Activated CD4-positive, alpha-beta T cell treated with anti-CD3 and anti-CD28 coated beads, Interleukin-2, amount 10 ng/mL, durations not matched to agents 7 days and 5 days (primary cell): ENCODE measurements at regions of chr20 and their contacts with region 1.

Region 1: DNA sequence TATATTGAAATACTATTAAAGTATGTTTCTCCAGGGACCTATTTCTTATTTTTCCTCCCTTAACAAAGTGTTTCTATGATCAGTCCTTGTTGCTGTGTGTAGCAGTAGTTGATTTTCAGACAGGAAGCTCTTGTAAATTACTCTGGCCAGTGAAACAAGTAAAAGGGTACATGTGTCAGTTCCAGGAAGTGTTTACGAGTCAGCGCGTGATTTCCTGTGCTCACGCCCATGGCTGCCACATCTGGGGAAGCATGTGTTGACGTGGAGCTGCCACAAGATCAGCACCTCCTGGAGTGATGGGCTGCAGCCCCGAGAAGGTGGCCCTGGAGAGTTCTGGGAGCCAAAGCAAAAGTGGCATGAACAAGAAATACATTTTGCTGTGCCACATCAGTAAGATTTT is 38.6 kb upstream of the GGTLC1 start:
- DNase-seq: peak; percentile 88
- H3K4me3 Mint-ChIP-seq: peak overlapping the region; percentile 60
- H3K27ac Mint-ChIP-seq: peak overlapping the region; percentile 97
- H3K4me1 Mint-ChIP-seq: peaks cover 65% of the 10 kb centered on the region
- H3K27me3 Mint-ChIP-seq: no peaks in the 10 kb centered on the region

Region 2: DNA sequence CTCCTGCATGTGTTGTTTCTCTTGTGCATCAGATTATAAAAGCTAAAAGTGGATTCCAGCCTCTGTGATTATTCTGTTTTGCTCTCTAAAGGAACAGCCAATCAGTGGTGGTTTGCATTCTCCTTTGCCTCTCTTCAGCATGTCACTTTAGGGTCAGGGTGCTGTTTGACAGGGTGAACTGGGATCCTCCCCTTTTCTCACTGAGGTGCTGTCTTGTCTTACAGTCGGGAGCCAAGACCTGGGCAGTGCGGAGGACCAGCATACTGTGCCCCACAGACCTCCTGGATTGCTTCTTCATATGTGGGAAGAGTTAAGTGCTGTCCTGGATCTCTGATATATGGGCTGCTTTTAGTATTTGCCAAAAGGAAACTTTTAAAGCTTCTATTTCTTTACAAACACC is 185.5 kb before region 1 on chr20:
- CTCF ChIA-PET with region 1: no interaction called
- POLR2A ChIA-PET with region 1: no interaction called
- DNase-seq: no peak
- H3K4me3 Mint-ChIP-seq: no peak overlapping the region
- H3K27ac Mint-ChIP-seq: no peak overlapping the region
- H3K4me1 Mint-ChIP-seq: peaks cover 1% of the 10 kb centered on the region
- H3K27me3 Mint-ChIP-seq: peaks cover 13% of the 10 kb centered on the region

Region 3: DNA sequence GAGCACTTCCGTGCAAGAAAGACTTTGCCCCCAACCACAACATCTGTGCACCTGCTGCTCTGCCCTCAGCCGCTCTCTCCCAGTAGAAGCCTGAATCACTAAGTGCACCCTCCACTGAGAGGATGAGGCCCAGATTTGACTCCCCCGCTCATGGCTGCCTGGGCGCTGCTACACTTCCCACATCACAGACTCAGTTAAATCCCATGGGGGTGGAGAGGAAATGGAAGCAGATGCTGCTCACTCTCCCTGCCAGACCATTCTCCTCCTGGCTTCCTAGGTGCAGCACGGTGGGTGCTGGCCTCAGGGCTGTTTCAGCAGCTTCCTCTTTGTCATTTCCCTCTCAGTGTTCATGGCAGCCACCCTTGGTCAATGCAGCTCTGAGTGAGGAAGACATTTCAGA is 152.5 kb before region 1 on chr20:
- CTCF ChIA-PET with region 1: no interaction called
- POLR2A ChIA-PET with region 1: no interaction called
- DNase-seq: no peak
- H3K4me3 Mint-ChIP-seq: no peak overlapping the region
- H3K27ac Mint-ChIP-seq: peak overlapping the region; percentile 65
- H3K4me1 Mint-ChIP-seq: peaks cover 34% of the 10 kb centered on the region
- H3K27me3 Mint-ChIP-seq: no peaks in the 10 kb centered on the region

Region 4: GRCh38 chr20:24039196-24039595 is 12.0 kb after region 1 on chr20:
- CTCF ChIA-PET with region 1: interaction called, 21 read pairs
- POLR2A ChIA-PET with region 1: interaction called, 3 read pairs
- DNase-seq: no peak
- H3K4me3 Mint-ChIP-seq: no peak overlapping the region
- H3K27ac Mint-ChIP-seq: no peak overlapping the region
- H3K4me1 Mint-ChIP-seq: peaks cover 18% of the 10 kb centered on the region
- H3K27me3 Mint-ChIP-seq: no peaks in the 10 kb centered on the region